ENCODE measurements at regions of chr6 and their contacts with region 1.

Region 1: DNA sequence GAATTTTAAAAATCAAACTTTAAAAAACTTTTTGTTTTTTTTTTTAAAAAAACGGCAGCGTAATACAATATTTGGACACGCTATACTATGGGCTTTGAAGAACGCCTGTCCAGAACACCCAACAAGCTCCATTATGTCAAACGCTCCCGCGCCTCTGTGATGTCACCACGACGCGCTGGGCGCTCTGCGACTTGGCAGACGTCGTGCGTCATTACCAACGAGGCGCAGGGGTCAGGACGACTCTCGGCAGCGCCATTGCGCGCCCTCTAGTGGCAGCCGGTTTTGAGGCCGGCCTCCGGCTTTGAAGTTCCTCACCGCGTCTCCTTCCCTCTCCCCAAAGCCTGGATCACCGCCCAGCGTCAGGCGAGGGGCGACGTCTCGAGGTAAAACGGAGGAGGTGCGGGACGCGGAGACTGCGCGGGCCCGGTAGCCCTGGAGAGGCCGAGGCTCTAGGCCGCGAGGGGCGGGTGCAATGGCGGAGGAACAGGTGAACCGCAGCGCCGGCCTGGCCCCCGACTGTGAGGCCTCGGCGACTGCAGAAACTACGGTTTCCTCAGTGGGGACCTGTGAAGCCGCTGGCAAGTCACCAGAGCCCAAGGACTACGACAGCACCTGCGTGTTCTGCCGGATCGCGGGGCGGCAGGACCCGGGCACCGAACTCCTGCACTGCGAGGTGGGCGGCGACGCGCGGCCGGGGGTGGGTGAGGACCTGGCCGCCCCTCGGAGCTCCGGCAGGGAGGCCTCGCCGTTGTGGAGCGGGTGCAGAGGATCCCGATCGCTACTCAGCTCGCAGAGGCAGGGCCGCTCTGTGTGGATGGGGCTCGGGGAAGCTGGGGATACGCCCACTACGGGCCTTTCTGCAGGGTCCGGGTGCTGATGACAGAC is at the start of gene HINT3:
- DNase-seq: peak; percentile 96 to 99
- ATAC-seq: peak; percentile 89 to 98 (median 90)
- H3K4me3 ChIP-seq: peak within 1 kb of the TSS; percentile 99
- H3K4me3 Mint-ChIP-seq: no peak within 1 kb of the TSS
- H3K27ac ChIP-seq: peak within 1 kb of the TSS; percentile 100
- H3K27ac Mint-ChIP-seq: no peak within 1 kb of the TSS
- H3K4me1 ChIP-seq: peaks cover 8% of the 10 kb centered on the region
- H3K4me1 Mint-ChIP-seq: peaks cover 0 to 4% of the 10 kb centered on the region in 2 donors
- H3K27me3 ChIP-seq: no peaks in the 10 kb centered on the region
- H3K27me3 Mint-ChIP-seq: peaks cover 0 to 3% of the 10 kb centered on the region in 2 donors
- CTCF ChIP-seq: peak; percentile 98
- total RNA-seq, gene HINT3: 9.7 to 10.5 (median 10.3) TPM

Region 2: GRCh38 chr6:125918681-125919566 is 37.8 kb before region 1 on chr6:
- intact Hi-C with region 1: loop called (anchors 1 kb)
- DNase-seq: peak in 1 of 2 donors; percentile 83
- ATAC-seq: peak; percentile 88 to 95 (median 94)
- H3K4me3 ChIP-seq: no peak overlapping the region
- H3K4me3 Mint-ChIP-seq: peak overlapping the region; percentile 19
- H3K27ac ChIP-seq: peak overlapping the region; percentile 57
- H3K27ac Mint-ChIP-seq: peak overlapping the region; percentile 87 to 88
- H3K4me1 ChIP-seq: no peaks in the 10 kb centered on the region
- H3K4me1 Mint-ChIP-seq: peaks cover 19 to 24% of the 10 kb centered on the region in 2 donors
- H3K27me3 ChIP-seq: no peaks in the 10 kb centered on the region
- H3K27me3 Mint-ChIP-seq: no peaks in the 10 kb centered on the region
- CTCF ChIP-seq: no peak

Region 3: DNA sequence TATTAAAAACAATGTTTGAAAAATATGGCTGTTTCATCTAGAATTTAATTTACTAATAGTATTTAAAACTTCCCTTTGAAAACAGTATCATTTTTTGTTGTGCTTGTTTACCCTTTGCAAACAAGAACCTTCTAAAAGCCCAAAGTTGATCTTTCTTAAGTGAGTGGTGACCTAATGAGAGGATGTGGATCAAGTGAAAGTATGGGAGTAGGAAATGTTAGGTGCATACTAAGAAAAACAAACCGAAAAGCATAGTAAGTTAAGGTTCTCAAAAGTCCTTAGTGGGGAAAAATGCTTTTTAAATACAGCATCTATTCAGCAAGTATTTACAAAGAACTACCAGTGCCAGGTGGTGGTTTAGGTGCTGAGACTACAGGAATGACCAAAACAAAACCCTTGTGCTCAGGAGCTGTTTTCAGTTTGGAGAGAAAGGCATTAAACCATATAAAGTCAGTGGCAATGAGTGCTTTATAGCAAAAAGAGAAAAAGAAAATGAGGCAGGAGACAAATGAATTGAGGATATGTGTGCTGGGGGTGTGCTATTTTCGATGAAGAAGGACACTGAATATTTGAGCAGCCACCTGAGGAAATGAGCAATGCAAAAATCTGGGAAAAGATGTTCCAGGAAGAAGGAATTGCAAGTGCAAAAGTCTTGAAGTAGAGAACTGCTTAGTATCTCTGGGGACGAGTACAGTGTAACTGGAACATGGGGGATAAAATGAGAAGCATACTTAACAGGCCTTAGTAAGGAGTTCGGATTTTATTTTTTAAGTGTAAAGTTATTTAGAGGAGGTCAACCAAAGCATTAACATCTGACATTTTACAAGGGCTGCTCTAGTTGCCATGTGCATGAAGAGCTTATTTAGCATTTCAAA is 1333.9 kb after region 1 on chr6:
- intact Hi-C with region 1: no loop called
- DNase-seq: no peak
- ATAC-seq: no peak
- H3K4me3 ChIP-seq: no peak overlapping the region
- H3K4me3 Mint-ChIP-seq: no peak overlapping the region
- H3K27ac ChIP-seq: no peak overlapping the region
- H3K27ac Mint-ChIP-seq: peak overlapping the region; percentile 45 to 63
- H3K4me1 ChIP-seq: no peaks in the 10 kb centered on the region
- H3K4me1 Mint-ChIP-seq: peaks cover 27 to 30% of the 10 kb centered on the region in 2 donors
- H3K27me3 ChIP-seq: no peaks in the 10 kb centered on the region
- H3K27me3 Mint-ChIP-seq: no peaks in the 10 kb centered on the region
- CTCF ChIP-seq: no peak